BJ (cell line): ENCODE measurements at regions of chr6 and their contacts with region 1.

Region 1: GRCh38 chr6:143450453-143451371 is at the starts of genes ADAT2 and PEX3:
- DNase-seq: peak; percentile 56
- H3K4me3 ChIP-seq: peak within 1 kb of the TSS; percentile 78
- H3K27me3 ChIP-seq: no peaks in the 10 kb centered on the region
- CTCF ChIP-seq: no peak
- polyA plus RNA-seq, gene ADAT2: 1.3 and 2.0 TPM in 2 replicates
- polyA plus RNA-seq, gene PEX3: 19.7 and 31.1 TPM in 2 replicates

Region 2: DNA sequence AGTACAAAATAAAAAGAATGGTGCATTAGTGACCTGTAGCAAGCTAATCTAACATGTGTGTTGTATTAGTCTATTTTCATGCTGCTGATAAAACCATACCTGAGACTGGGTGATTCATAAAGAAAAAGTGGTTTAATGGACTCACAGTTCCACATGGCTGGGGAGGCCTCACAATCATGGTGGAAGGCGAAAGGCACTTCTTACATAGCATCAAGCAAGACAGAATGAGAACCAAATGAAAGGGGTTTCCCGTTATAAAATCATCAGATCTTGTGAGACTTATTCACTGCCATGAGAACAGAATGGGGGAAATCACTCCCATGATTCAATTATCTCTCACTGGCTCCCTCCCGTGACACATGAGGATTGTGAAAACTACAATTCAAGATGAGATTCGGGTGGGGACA is 435.4 kb before region 1 on chr6:
- CTCF ChIA-PET with region 1: no interaction called
- POLR2A ChIA-PET with region 1: interaction called, 10 read pairs
- DNase-seq: no peak
- H3K4me3 ChIP-seq: no peak overlapping the region
- H3K27me3 ChIP-seq: no peaks in the 10 kb centered on the region
- CTCF ChIP-seq: no peak